Activated CD4-positive, alpha-beta memory T cell treated with anti-CD3 and anti-CD28 coated beads, Interleukin-2, amount 10 ng/mL, durations not matched to agents 7 days and 5 days (primary cell): ENCODE measurements at regions of chr1 and their contacts with region 1.

Region 1: GRCh38 chr1:192580351-192580962 is 4.9 kb downstream of the RGS1 start:
- DNase-seq: no peak
- H3K4me3 Mint-ChIP-seq: peak overlapping the region; percentile 15
- H3K27ac Mint-ChIP-seq: no peak overlapping the region
- H3K4me1 Mint-ChIP-seq: peaks cover 39% of the 10 kb centered on the region
- H3K27me3 Mint-ChIP-seq: no peaks in the 10 kb centered on the region

Region 2: GRCh38 chr1:192539297-192540092 is 41.0 kb before region 1 on chr1:
- CTCF ChIA-PET with region 1: interaction called, 9 read pairs
- POLR2A ChIA-PET with region 1: interaction called, 10 read pairs
- DNase-seq: no peak
- H3K4me3 Mint-ChIP-seq: peak overlapping the region; percentile 17
- H3K27ac Mint-ChIP-seq: peak overlapping the region; percentile 83
- H3K4me1 Mint-ChIP-seq: peaks cover 73% of the 10 kb centered on the region
- H3K27me3 Mint-ChIP-seq: no peaks in the 10 kb centered on the region